ENCODE measurements at regions of chr9 and their contacts with region 1.

Region 1: GRCh38 chr9:120714088-120714845 is at the start of gene MEGF9:
- DNase-seq: peak; percentile 97 to 98 (median 98)
- H3K4me3 ChIP-seq: peak within 1 kb of the TSS; percentile 78
- H3K27ac ChIP-seq: peak within 1 kb of the TSS; percentile 80 to 81
- H3K4me1 ChIP-seq: peaks cover 6% of the 10 kb centered on the region
- H3K27me3 ChIP-seq: no peaks in the 10 kb centered on the region
- CTCF ChIP-seq: peak in 1 of 3 donors; percentile 21
- EP300 ChIP-seq: no peak
- POLR2A ChIP-seq: peak; percentile 58
- total RNA-seq, gene MEGF9: 12.6 to 20.8 (median 14.6) TPM

Region 2: GRCh38 chr9:120562861-120563443 is 151.3 kb before region 1 on chr9:
- intact Hi-C with region 1: no loop called
- DNase-seq: peak in 2 of 5 donors; percentile 32 to 54
- H3K4me3 ChIP-seq: no peak overlapping the region
- H3K27ac ChIP-seq: no peak overlapping the region
- H3K4me1 ChIP-seq: peaks cover 20% of the 10 kb centered on the region
- H3K27me3 ChIP-seq: no peaks in the 10 kb centered on the region
- CTCF ChIP-seq: no peak
- EP300 ChIP-seq: no peak
- POLR2A ChIP-seq: no peak

Region 3: GRCh38 chr9:120619751-120620655 is 94.3 kb before region 1 on chr9:
- intact Hi-C with region 1: loop called in 2 of 4 experiments (anchors 10 kb)
- DNase-seq: peak in 4 of 5 donors; percentile 30 to 69 (median 44)
- H3K4me3 ChIP-seq: no peak overlapping the region
- H3K27ac ChIP-seq: no peak overlapping the region
- H3K4me1 ChIP-seq: no peaks in the 10 kb centered on the region
- H3K27me3 ChIP-seq: no peaks in the 10 kb centered on the region
- CTCF ChIP-seq: peak; percentile 71 to 80 (median 73)
- EP300 ChIP-seq: no peak
- POLR2A ChIP-seq: no peak

Measured in ovary (tissue), 10 donors.